ENCODE measurements at regions of chr6 and their contacts with region 1.

Region 1: DNA sequence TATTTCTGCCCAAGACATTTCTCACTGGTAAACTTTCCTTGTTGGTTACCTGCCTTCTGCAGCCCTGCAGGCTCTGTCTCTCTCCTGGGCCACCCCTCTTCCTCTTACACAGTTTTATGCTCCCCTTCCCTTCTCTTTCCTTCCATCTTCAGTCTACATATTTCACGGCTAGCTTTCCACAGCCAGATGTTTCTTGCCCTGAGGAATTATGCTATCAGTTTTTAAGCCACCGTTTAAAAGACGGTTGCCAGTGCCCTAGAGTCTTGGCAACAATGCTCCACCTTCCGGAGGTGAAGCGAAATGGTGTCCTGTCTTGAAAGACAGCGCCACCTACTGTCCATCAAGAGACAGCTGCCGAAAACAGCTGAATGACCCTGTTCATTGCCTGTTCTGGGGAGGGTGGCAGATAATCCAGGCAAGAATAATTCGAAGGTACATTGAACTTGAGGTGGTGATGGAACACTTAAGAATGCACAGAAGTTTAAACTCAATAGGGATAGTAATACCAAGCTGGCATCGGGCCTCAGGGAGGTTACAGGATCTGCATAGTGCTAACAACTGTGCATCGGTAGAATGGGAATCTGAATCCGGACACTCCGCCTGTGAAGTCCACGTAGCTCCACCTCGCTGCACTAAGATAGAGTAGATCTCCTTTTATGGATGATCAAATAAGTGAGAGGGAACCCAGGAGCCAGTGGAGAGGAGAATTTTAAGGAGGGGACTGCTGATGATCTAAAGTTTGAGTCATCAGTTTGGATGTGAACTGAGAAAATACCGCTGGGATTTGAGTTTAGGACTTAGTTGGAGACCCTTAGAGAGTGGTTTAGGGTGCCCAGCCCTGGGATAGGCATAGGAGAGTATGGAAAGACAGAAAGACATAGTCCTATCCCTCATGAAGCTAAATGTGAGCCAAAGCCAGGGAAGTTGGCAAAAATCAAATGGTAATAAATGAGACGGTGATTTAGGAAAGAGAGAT is 4.8 kb upstream of the TRIM40 start:
- H3K4me3 ChIP-seq: no peak overlapping the region
- H3K27ac ChIP-seq: no peak overlapping the region
- H3K4me1 ChIP-seq: no peaks in the 10 kb centered on the region
- CTCF ChIP-seq: peak; percentile 98

Region 2: GRCh38 chr6:29829766-29830165 is 301.4 kb before region 1 on chr6:
- CTCF ChIA-PET with region 1: no interaction called
- POLR2A ChIA-PET with region 1: no interaction called
- H3K4me3 ChIP-seq: no peak overlapping the region
- H3K27ac ChIP-seq: no peak overlapping the region
- H3K4me1 ChIP-seq: no peaks in the 10 kb centered on the region
- CTCF ChIP-seq: no peak

Region 3: DNA sequence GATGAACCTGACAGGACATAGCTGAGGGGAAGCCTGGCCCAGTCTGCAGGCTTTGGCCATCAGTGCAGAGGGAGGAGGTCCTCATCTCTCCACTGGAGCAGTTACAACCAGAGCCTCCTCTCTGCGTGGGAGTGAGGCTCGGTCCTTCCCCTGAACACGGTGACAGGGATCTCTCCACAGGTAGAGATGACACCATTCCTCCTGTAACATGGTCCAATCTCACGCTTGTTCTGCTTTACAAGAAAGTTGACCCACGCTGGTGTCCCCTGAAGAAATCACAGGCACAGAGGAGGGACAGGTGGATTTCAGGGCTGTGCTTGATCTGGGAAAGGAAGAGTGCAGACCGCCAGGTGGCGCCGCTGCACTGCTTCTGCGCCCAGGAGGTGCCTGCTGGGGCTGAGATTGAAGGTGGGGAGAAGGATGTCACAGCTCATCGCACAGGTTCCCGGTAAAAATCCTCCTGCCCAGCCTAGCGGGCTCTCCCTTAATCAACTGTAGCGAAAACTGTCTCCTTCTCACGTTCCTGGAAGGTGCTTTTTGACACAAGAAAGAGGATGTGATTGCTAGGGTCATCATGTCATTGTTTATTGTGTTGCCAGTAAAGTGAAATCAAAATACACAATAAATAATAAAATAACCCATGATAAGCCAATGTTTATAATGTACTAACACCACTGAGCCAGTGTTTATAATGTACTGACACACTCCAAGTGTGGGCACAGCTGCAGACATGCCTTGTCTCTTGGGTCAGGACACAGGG is 283.1 kb before region 1 on chr6:
- CTCF ChIA-PET with region 1: interaction called, 19 read pairs
- POLR2A ChIA-PET with region 1: no interaction called
- H3K4me3 ChIP-seq: no peak overlapping the region
- H3K27ac ChIP-seq: no peak overlapping the region
- H3K4me1 ChIP-seq: no peaks in the 10 kb centered on the region
- CTCF ChIP-seq: peak; percentile 95

Region 4: DNA sequence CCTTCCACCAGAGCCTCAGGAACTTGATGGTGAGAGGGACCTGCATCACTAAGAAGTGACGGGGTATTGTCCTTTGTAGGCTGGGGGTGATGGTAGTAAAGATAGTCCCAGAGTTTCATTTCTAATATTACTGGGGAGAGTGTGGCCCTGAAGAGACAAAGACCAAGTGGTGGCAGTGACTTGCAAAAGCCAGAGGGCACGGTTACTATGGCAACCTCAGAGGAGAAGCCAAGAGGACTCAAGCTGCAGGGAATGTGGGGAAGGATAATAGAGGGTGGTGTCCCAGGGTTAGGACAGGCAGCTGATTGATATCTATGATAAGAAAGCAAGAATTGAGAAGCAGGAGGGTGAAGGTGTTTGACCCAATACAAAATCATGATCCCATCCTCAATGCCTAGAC is 261.1 kb before region 1 on chr6:
- CTCF ChIA-PET with region 1: no interaction called
- POLR2A ChIA-PET with region 1: no interaction called
- H3K4me3 ChIP-seq: no peak overlapping the region
- H3K27ac ChIP-seq: no peak overlapping the region
- H3K4me1 ChIP-seq: no peaks in the 10 kb centered on the region
- CTCF ChIP-seq: no peak

Region 5: DNA sequence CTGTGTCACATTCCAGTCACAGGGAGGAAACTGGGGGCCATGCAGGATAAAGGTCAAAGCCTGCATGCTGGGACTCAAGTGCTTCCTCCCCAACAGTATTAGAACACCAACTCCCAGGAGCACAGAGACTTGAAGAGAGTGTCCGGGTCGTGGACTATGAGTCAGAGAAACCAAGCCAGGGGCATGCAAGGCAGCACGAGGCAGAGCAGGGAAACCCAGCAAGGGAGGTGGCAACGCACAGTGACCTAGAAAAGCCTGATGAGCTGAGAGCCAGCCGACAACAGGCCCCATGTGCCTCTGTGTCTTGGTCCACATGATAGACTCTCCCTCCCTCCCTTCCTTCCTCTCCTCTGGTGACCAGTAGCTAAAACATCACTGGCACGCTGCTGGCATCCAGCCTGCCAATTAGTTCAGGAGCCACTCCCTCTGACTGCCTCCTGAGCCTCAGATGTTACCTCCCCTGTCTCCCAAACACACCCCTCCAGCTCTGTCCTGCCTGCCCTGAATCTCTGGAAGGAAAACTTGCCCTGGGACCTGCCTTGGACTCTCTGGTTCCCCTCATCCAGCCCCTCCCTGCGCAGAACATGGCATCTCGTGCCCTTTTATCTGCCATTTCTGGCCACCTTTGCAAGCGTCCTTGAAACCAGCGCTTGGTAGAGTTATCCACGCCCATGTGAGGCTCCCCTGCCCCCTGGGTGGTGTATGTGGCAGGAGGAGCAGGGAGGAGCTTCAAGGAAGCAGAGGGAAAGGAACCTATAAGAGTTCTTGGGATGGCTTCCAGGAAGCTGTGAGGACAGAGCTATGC is 39.4 kb before region 1 on chr6:
- CTCF ChIA-PET with region 1: interaction called, 10 read pairs
- POLR2A ChIA-PET with region 1: no interaction called
- H3K4me3 ChIP-seq: no peak overlapping the region
- H3K27ac ChIP-seq: no peak overlapping the region
- H3K4me1 ChIP-seq: peaks cover 4% of the 10 kb centered on the region
- CTCF ChIP-seq: no peak

Region 6: DNA sequence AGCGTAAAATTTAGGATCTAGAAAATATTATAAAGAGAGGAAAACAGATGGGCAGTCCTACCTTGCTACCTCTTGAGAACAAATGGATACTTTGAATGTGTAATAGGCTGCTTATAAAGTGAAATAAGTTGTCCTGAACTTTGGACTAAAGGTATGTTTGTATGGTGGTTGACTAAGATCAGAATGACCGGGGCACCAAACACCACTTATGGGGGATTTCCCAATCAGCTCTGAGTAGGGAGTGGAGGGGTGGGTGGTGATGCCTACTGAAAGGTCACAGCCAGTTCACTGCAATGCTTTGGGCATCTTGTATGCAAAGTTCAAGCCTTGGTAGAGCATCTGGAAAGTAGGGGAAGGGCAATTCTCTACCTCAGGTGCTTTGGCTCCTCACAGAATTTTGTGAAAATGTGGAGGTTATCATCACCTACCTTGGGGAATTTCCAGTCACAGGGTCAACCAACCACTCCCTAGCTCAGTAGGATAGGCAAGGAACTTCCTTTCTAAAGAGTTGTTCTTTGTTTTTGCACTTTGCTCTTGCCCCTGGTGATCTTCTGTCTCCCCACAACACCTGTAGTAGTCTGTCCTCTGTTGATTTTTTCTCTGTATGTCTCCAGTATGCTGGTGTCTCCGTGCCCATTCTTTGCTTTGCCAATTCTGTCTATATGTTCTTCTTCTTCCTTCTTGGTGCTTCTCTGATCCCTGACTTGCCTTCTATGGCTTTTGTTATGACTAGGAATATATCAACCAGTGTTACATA is 18.0 kb before region 1 on chr6 and contains the start of gene TRIM31:
- CTCF ChIA-PET with region 1: interaction called, 86 read pairs
- POLR2A ChIA-PET with region 1: no interaction called
- H3K4me3 ChIP-seq: no peak within 1 kb of the TSS
- H3K27ac ChIP-seq: no peak within 1 kb of the TSS
- H3K4me1 ChIP-seq: no peaks in the 10 kb centered on the region
- CTCF ChIP-seq: no peak

Region 7: DNA sequence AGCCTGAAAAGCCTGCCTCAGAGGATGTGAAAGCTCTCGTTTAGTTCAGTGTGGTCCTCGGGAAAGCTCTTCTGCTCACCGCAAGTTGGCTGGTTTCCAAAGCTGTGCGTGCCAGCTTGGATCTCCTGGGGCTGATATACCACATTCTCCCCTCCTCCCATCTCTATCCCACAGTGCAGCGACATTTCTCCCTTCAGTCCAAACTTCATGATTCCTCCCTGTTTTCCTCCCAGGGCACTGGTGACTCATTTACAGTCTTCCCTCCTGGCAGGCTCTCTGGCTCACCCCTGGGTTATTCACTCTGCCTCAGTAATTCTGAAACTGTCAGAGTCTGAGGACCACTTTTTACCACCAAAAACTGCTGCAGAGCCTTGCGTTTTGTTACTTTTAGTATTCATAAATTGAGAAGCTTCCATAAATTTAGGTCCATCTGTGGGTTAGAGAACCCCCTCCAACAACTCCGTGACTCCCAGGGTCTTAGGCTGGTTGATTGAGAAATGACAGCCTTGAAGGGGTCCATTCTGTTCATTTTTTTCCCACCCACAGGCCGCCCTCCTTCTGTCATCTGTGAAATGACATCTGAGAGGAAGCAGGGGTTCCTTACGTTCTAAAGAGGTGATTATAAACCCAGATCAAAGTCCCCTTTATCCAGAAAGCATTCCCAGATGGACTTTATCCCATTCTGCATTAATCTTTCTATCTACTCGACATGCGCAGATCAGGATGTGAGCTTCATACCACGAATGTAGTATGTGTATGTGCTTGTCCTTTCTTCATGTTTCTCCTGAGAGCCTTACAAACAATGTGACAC is 23.7 kb after region 1 on chr6:
- CTCF ChIA-PET with region 1: interaction called, 80 read pairs
- POLR2A ChIA-PET with region 1: interaction called, 3 read pairs
- H3K4me3 ChIP-seq: no peak overlapping the region
- H3K27ac ChIP-seq: peak overlapping the region; percentile 67
- H3K4me1 ChIP-seq: peaks cover 27% of the 10 kb centered on the region
- CTCF ChIP-seq: no peak

Region 8: GRCh38 chr6:30169658-30170614 is 38.8 kb after region 1 on chr6:
- CTCF ChIA-PET with region 1: interaction called, 49 read pairs
- POLR2A ChIA-PET with region 1: no interaction called
- H3K4me3 ChIP-seq: no peak overlapping the region
- H3K27ac ChIP-seq: no peak overlapping the region
- H3K4me1 ChIP-seq: no peaks in the 10 kb centered on the region
- CTCF ChIP-seq: peak; percentile 73

Region 9: DNA sequence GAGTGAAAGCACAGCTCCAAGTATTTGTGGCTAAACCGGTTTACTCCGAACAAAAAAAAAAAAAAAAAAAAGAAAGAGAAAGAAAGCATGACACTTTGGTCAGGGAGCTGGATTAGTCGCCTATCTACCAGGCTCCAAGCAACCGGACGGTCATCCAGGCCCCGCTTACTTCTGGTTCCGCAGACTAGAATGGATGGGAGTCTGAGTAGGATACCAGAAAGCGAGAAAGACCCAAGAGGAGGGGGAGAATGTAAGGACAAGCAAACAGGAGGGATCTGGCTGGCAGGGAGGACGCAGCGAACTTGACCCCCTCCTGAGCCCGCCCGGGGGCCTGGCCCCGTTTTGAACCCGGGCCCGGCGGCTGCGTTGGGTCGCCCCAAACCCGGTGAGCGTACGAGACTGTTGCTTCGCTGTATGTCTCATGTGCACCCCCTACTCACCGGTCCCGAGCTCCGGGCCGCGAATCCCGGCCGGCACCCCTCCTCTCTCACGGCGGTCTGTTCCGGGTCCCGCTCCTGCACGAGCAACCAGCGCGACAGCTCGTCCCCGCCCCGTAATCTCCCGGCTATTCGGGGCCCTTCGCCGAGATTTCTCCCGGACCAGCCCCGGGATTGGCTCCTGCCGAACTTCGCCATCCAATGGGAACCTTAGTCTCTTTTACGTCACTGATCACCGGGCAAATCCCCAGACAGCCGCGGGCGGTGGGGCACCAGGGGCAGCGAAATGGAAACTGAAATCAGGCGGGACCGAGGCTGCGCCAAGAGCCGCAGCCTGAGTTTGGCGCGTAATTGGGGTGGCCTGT is 81.9 kb after region 1 on chr6 and contains the start of gene TRIM26:
- CTCF ChIA-PET with region 1: interaction called, 12 read pairs
- POLR2A ChIA-PET with region 1: interaction called, 3 read pairs
- H3K4me3 ChIP-seq: peak within 1 kb of the TSS; percentile 93
- H3K27ac ChIP-seq: peak within 1 kb of the TSS; percentile 88
- H3K4me1 ChIP-seq: peaks cover 31% of the 10 kb centered on the region
- CTCF ChIP-seq: no peak